Left cardiac atrium (tissue), 4 donors: ENCODE measurements at regions of chr3 and their contacts with region 1.

Region 1: DNA sequence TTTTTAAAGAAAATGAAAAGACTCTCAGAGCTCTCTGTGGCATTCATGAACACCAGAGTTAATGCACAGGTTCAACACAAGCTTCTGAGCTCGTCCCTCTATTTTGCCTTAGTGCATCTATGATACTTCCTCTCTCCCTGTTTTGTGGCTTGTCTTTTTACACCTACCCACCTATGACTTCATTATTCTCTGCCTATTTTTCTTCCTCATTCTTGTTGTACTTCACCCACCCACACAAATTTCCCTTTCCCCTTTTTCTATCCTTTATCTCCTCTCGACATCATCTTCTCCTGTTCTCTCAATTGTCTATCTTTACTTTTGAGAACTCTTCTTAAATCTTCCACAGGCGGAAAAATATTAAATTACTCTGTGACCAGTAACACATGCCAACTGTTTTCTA is 48.6 kb downstream of the OR5H15 start:
- DNase-seq: no peak
- ATAC-seq: no peak

Region 2: DNA sequence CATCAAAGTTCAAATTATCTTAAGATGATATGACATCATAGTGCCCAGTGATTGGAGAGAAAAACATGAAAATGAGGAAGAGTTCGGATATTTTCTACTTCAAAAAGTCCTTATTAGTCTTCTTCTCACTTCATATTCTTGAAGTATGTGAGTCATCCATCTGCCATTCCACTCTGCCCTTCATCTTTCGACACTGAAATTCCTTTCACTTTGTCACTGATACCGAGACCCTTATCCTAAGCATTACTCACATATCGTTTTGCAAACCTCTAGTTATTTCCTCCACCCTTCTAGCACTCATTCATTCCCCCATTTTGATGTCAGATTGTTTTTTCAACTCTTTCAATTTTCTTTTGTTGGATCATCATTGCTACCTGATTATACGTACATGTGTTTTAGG is 63.8 kb before region 1 on chr3:
- intact Hi-C with region 1: loop called in 1 of 2 experiments (anchors 10 kb)
- DNase-seq: no peak
- ATAC-seq: no peak

Region 3: DNA sequence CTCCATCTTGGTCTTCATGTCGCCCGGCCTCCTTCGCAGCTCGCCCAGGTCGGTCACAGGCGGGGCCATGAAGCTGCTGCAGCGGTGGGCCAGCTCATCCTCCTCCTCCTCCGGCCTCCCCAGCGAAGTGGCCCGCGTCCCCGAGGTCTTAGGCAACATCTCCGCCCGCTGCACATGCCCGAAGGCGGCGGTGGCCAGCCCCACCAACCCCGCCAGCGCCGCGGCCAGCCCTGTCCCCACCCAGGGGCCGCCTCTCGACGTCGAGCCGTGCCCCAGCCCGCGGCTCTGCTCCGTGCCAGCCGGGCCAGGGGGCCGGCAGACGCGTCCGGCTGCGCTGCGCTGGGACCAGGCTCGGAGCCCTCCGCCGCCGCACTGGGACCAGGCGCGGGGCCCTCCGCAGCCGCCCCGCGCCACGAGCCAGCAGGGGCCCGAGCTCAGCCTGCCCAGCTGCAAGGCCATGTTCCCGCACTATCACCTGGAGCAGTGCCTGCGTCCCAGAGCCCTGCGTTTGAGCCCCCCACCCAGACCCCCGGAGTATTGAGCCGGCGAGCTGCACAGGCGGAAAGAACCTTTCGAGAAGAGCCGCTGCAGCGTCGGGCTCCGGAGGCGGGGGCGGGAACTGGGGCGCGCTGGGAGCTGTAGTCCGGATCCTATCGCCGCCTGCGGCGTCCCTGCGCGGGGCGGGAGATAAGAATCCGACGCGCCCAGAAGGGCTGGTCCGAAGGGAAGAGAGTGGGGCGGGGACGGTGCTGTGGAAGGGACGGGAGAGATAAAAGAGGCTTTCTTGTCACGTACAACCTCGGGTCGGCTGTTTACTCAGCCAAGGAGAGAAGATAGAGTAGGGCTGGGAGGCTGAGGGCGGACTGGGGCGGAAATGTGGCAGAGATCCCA is 378.2 kb after region 1 on chr3 and contains the start of gene CPOX:
- intact Hi-C with region 1: no loop called
- DNase-seq: peak; percentile 94
- ATAC-seq: peak; percentile 96 to 98
- total RNA-seq, gene CPOX: 9.2 to 12.7 TPM